HAP-1 (cell line): ENCODE measurements at regions of chr11 and their contacts with region 1.

Region 1: GRCh38 chr11:10735481-10736475 is 15.3 kb upstream of the CTR9 start:
- DNase-seq: peak; percentile 95 to 98
- H3K4me3 ChIP-seq: no peak overlapping the region
- H3K4me1 ChIP-seq: peaks cover 4% of the 10 kb centered on the region
- H3K27me3 ChIP-seq: no peaks in the 10 kb centered on the region

Region 2: GRCh38 chr11:9757809-9758636 is 977.8 kb before region 1 on chr11:
- in situ Hi-C with region 1: loop called (anchors 10 kb)
- DNase-seq: peak; percentile 66 to 94
- H3K4me3 ChIP-seq: peak overlapping the region; percentile 46
- H3K4me1 ChIP-seq: peaks cover 38% of the 10 kb centered on the region
- H3K27me3 ChIP-seq: no peaks in the 10 kb centered on the region

Region 3: GRCh38 chr11:9861860-9862725 is 873.7 kb before region 1 on chr11:
- in situ Hi-C with region 1: loop called (anchors 25 kb)
- DNase-seq: peak; percentile 73 to 79
- H3K4me3 ChIP-seq: no peak overlapping the region
- H3K4me1 ChIP-seq: peaks cover 12% of the 10 kb centered on the region
- H3K27me3 ChIP-seq: no peaks in the 10 kb centered on the region

Region 4: GRCh38 chr11:10225553-10225952 is 510.2 kb before region 1 on chr11:
- in situ Hi-C with region 1: no loop called
- DNase-seq: no peak
- H3K4me3 ChIP-seq: no peak overlapping the region
- H3K4me1 ChIP-seq: no peaks in the 10 kb centered on the region
- H3K27me3 ChIP-seq: no peaks in the 10 kb centered on the region

Region 5: GRCh38 chr11:10322830-10323792 is 412.7 kb before region 1 on chr11:
- in situ Hi-C with region 1: loop called (anchors 10 kb)
- DNase-seq: peak; percentile 49 to 65
- H3K4me3 ChIP-seq: no peak overlapping the region
- H3K4me1 ChIP-seq: peaks cover 17% of the 10 kb centered on the region
- H3K27me3 ChIP-seq: no peaks in the 10 kb centered on the region

Region 6: DNA sequence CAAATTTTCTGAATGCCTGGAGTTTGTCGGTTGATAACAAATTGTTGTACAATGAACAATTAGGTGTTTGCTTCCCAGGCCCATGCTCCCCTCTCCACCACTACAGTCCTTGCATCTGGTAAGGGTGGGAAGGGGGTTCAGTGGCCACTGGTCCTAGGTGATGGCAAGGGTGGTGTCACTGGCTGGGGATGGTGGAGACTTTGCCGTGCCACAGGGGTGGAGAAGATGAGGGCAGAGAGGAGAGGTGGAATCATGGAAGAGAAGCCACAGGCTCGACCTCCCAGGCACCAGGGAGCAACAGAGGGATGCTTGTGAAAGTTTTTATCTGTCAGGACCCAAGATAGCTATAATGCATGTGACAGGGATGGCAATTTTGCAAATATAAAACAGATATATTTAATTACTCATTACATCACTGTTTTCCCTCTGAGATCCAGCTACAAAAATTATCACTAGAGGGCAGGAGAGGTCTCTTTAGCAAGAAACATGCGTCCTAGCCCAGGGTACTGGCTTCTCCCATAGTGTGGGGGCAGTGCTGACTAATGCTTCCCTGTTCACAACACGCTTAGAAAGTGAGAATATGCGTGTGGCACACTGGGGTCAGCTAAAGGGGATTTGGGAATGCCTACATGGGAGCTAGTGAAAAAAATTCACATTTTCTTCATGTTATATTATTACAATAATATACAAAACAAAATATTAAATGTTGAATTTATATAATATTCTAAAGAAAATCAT is 329.8 kb before region 1 on chr11:
- in situ Hi-C with region 1: loop called (anchors 5 kb)
- DNase-seq: peak; percentile 81 to 87
- H3K4me3 ChIP-seq: no peak overlapping the region
- H3K4me1 ChIP-seq: peaks cover 3% of the 10 kb centered on the region; the same call in 1 of the 2 replicates
- H3K27me3 ChIP-seq: no peaks in the 10 kb centered on the region

Region 7: GRCh38 chr11:10540923-10541560 is 194.7 kb before region 1 on chr11 and contains the start of gene RNF141:
- in situ Hi-C with region 1: loop called (anchors 25 kb)
- DNase-seq: peak; percentile 91 to 98
- H3K4me3 ChIP-seq: peak within 1 kb of the TSS; percentile 90
- H3K4me1 ChIP-seq: no peaks in the 10 kb centered on the region; the same call in 1 of the 2 replicates
- H3K27me3 ChIP-seq: no peaks in the 10 kb centered on the region

Region 8: DNA sequence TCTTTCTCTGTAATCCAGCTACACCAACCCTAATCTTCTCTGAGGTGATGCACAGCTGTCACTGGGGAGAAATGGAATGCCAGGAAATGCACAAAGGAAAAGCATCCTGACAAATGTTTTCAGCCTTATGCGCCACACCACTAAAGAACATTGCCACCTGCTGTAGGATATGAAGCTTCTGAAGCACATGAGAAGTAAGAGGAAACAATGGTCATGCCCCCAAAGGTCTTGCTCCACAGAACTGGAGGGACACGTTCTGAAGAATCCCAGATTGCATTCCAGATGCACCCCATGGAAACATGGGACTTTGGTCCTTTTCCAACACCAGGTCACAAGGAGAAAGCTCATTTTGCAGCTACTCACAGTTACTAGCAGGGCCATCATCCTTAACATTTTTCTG is 170.7 kb after region 1 on chr11:
- in situ Hi-C with region 1: no loop called
- DNase-seq: no peak
- H3K4me3 ChIP-seq: no peak overlapping the region
- H3K4me1 ChIP-seq: peaks cover 24% of the 10 kb centered on the region
- H3K27me3 ChIP-seq: no peaks in the 10 kb centered on the region

Region 9: DNA sequence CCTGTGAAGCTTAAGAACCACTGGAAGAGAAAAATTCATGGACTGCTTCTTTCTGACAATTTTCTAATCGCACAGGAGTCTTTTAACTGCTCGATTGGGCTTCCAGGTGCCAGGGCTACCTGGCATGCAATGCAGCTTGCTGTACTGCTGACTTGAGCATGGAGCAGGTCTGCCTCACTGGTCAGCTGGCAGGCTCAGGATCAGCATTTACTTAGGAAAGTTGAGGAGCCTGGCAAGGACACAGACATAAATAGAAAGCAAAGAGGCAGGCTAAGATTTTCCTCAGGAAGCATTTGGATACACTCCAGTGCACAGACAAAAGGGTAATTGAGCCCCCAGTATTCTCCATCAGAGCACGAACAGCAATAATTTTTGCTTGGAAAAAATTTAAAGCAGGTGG is 453.7 kb after region 1 on chr11:
- in situ Hi-C with region 1: no loop called
- DNase-seq: no peak
- H3K4me3 ChIP-seq: no peak overlapping the region
- H3K4me1 ChIP-seq: no peaks in the 10 kb centered on the region
- H3K27me3 ChIP-seq: no peaks in the 10 kb centered on the region